ENCODE measurements at regions of chr9 and their contacts with region 1.

Region 1: GRCh38 chr9:71249729-71250317 is 128.4 kb upstream of the TRPM3 start:
- DNase-seq: no peak
- ATAC-seq: peak in 1 of 2 donors; percentile 67
- H3K4me3 ChIP-seq: no peak overlapping the region
- H3K27ac ChIP-seq: no peak overlapping the region
- H3K4me1 ChIP-seq: no peaks in the 10 kb centered on the region
- H3K27me3 ChIP-seq: no peaks in the 10 kb centered on the region
- CTCF ChIP-seq: peak; percentile 52

Region 2: DNA sequence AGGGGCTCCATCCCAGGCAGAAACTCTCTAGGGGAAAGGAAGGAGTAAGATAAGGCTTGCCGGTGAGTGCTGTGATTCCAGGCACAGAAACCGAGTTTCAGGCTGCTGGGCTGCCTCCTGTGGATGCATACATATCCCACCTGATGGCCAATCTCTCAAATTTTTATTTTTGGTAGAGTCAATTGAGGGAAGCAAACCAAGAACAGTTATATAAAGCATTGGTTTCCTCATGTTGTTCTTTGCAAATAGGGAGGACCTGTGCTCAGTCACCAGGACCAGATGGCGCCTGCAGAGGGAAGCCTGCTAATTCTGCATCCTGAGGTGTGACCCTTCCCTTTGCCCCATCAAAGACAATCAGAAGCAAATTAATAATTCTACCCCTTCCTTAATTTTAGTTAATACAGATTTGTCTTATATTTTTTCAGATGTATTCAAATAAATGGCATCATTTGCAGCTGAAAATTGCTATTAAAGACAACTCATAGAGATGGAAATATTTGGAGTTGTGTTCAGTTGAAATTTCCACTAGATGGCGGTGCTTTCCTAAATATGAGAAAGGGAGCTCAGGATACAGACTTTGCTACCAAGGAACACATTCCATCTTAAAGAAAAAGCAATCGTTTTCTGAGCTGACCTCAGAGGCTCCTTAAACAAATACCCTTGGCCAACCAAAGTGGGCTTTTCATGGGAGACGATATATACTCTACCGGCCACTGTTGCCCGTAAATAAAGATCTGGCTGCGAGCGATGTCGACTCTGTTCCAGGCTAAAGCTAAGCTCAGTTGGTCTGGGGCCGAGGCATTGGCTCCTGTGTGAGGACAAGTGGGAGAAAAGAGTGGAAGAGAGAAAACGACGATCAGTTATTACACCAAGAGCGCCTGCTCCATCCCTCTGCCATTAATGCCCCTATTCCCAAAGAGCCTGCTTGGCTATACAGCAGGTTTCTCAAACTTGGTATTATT is 609.7 kb before region 1 on chr9:
- intact Hi-C with region 1: loop called (anchors 10 kb)
- DNase-seq: no peak
- ATAC-seq: peak; percentile 29 to 67
- H3K4me3 ChIP-seq: no peak overlapping the region
- H3K27ac ChIP-seq: no peak overlapping the region
- H3K4me1 ChIP-seq: no peaks in the 10 kb centered on the region
- H3K27me3 ChIP-seq: no peaks in the 10 kb centered on the region
- CTCF ChIP-seq: peak; percentile 54

Region 3: DNA sequence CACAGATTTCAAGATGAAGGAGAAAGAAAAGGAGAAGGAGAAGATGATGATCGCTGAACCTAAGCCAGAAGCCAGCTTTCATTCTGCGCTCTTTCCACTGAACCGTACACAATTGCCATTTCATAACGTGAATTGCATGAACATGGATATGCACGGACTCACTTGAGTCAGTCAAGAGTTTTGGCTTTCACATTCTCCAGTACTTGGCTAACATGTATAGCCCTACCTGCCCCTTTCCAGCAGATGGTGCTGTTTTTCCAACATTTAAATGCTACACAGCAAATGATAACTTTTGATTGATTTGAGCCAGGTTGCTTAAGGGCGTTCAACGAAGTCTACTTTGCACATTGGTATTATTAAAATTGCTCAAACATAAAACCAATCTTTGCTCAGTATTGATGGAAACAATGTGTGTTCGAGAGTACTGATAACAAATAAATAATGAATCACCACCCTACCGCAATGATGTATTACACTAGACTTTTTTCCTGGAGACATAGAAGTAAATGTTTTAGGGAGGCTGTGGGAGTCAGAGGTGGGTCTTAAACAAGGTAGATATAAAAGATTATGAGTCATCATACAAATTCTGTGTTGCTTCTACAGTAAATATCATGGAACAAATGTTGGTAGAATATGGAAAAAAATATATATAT is 324.8 kb before region 1 on chr9:
- intact Hi-C with region 1: loop called (anchors 5 kb)
- DNase-seq: no peak
- ATAC-seq: peak; percentile 89 to 94
- H3K4me3 ChIP-seq: no peak overlapping the region
- H3K27ac ChIP-seq: no peak overlapping the region
- H3K4me1 ChIP-seq: no peaks in the 10 kb centered on the region
- H3K27me3 ChIP-seq: no peaks in the 10 kb centered on the region
- CTCF ChIP-seq: peak; percentile 70

Region 4: GRCh38 chr9:71025201-71025600 is 224.6 kb before region 1 on chr9:
- intact Hi-C with region 1: no loop called
- DNase-seq: no peak
- ATAC-seq: no peak
- H3K4me3 ChIP-seq: no peak overlapping the region
- H3K27ac ChIP-seq: no peak overlapping the region
- H3K4me1 ChIP-seq: no peaks in the 10 kb centered on the region
- H3K27me3 ChIP-seq: no peaks in the 10 kb centered on the region
- CTCF ChIP-seq: no peak